Right lobe of liver (tissue), 6 donors: ENCODE measurements at regions of chr19 and their contacts with region 1.

Region 1: GRCh38 chr19:18589380-18590272 is 1.0 kb downstream of the REX1BD start:
- DNase-seq: peak; percentile 76 to 83 (median 78)
- ATAC-seq: peak; percentile 73 to 81 (median 77)
- H3K4me3 ChIP-seq: peak overlapping the region; percentile 77 to 92 (median 86)
- H3K27ac ChIP-seq: peak overlapping the region in 2 of 3 donors; percentile 52 to 78
- H3K4me1 ChIP-seq: peaks cover 0 to 17% (median 7%) of the 10 kb centered on the region in 4 donors
- H3K27me3 ChIP-seq: no peaks in the 10 kb centered on the region
- CTCF ChIP-seq: peak; percentile 19 to 36 (median 32)
- POLR2A ChIP-seq: no peak

Region 2: GRCh38 chr19:18846862-18847548 is 257.4 kb after region 1 on chr19:
- intact Hi-C with region 1: loop called in 1 of 2 experiments (anchors 5 kb)
- DNase-seq: peak; percentile 78 to 81 (median 81)
- ATAC-seq: peak; percentile 88 to 90 (median 89)
- H3K4me3 ChIP-seq: no peak overlapping the region
- H3K27ac ChIP-seq: no peak overlapping the region
- H3K4me1 ChIP-seq: peaks cover 0 to 21% (median 4%) of the 10 kb centered on the region in 4 donors
- H3K27me3 ChIP-seq: no peaks in the 10 kb centered on the region
- CTCF ChIP-seq: peak; percentile 78 to 93 (median 86)
- POLR2A ChIP-seq: no peak